PC-3 (cell line): ENCODE measurements at regions of chr11 and their contacts with region 1.

Region 1: GRCh38 chr11:46936138-46937110 is at the start of gene CSTPP1:
- DNase-seq: peak; percentile 91
- ATAC-seq: peak; percentile 96
- H3K4me3 ChIP-seq: peak within 1 kb of the TSS; percentile 72
- H3K27ac ChIP-seq: no peak within 1 kb of the TSS; the same call in 1 of the 2 replicates
- H3K4me1 ChIP-seq: peaks cover 3% of the 10 kb centered on the region; the same call in 1 of the 2 replicates
- H3K27me3 ChIP-seq: no peaks in the 10 kb centered on the region
- CTCF ChIP-seq: no peak
- total RNA-seq, gene CSTPP1: 15.2 and 21.7 TPM in 2 replicates

Region 2: GRCh38 chr11:46976182-46976854 is 39.9 kb after region 1 on chr11:
- CTCF ChIA-PET with region 1: interaction called, 12 read pairs
- POLR2A ChIA-PET with region 1: no interaction called
- intact Hi-C with region 1: no loop called
- DNase-seq: no peak
- ATAC-seq: no peak
- H3K4me3 ChIP-seq: no peak overlapping the region
- H3K27ac ChIP-seq: no peak overlapping the region
- H3K4me1 ChIP-seq: peaks cover 19% of the 10 kb centered on the region
- H3K27me3 ChIP-seq: no peaks in the 10 kb centered on the region
- CTCF ChIP-seq: no peak